Astrocyte of the cerebellum (primary cell): ENCODE measurements at regions of chr21 and their contacts with region 1.

Region 1: GRCh38 chr21:35753308-35753707 is 307.0 kb downstream of the SETD4 start:
- DNase-seq: no peak
- H3K4me3 ChIP-seq: no peak overlapping the region
- CTCF ChIP-seq: no peak

Region 2: DNA sequence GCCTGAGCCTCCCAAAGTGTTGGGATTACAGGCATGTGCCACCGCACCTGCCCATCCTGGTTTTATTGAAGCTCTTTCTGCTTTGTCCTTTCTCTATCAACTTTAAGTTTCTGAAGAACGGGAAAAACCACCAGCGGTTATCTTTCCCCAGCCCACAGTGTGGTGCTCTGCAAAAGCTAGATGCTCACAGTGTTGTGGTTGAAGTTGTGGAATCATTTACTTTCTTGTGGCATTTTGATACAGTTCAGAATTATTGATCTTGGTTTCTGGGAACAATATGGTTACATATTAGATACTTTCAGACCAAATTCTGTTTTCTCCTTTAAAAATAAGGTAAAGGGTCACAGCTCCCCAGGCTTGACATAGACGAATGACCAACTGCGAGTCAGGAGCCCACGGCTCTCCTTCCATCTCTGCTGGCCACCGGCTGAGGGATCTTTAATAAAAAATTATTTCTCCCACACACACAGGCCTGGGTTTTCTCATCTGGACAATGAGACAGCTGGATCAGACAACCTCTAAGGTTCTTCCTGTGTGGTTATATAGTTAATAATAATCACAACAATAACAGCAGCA is 78.3 kb before region 1 on chr21:
- in situ Hi-C with region 1: no loop called
- DNase-seq: no peak
- H3K4me3 ChIP-seq: no peak overlapping the region
- CTCF ChIP-seq: peak; percentile 12

Region 3: GRCh38 chr21:35796844-35797243 is 43.5 kb after region 1 on chr21:
- in situ Hi-C with region 1: loop called (anchors 5 kb)
- DNase-seq: no peak
- H3K4me3 ChIP-seq: no peak overlapping the region
- CTCF ChIP-seq: no peak